ENCODE measurements at regions of chr17 and their contacts with region 1.

Region 1: DNA sequence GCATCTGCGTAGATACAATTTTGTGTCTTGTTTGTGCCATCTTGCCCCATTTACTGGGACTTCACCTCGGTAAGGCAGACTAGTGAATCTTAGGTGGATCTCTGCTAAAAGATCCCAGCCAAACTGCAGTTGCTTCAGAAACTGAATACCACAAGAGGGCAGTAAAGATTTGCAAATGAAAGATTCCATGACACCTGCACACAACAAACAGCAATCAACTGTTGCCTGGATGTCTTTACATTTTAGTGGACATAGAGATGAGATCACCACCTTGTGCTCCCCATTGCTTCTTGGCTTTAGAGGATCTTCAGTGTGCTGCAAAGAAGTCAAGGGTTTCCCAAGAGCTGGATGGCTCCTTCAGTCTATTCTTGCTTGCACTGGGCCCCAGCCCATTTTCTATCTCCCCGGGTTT is 119.2 kb upstream of the CACNG5 start:
- DNase-seq: no peak
- H3K4me3 ChIP-seq: no peak overlapping the region
- H3K27ac ChIP-seq: no peak overlapping the region
- H3K4me1 ChIP-seq: no peaks in the 10 kb centered on the region
- H3K27me3 ChIP-seq: no peaks in the 10 kb centered on the region
- CTCF ChIP-seq: peak in 2 of 3 donors; percentile 30 to 62
- EP300 ChIP-seq: no peak
- POLR2A ChIP-seq: no peak

Region 2: DNA sequence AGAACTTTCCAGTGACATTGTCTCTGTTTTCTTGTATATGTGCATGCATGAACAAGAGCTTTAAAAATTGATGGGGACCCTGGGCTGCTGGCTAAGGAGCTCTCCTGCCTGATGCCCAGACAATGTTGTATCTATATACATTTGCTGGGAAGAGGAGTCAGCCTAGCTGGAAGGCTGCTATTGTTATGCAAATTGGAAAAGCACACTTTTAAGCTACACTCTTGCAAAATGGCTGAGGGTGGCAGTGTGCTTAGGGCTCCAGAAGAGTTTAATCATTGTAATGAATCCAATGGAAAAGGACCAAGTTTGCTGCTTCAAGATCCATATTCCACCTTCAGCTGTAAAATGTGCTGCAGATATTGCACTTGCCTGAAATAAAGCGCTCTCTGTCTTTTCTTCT is 241.5 kb before region 1 on chr17:
- intact Hi-C with region 1: no loop called
- DNase-seq: no peak
- H3K4me3 ChIP-seq: no peak overlapping the region
- H3K27ac ChIP-seq: no peak overlapping the region
- H3K4me1 ChIP-seq: peaks cover 3% of the 10 kb centered on the region
- H3K27me3 ChIP-seq: no peaks in the 10 kb centered on the region
- CTCF ChIP-seq: no peak
- EP300 ChIP-seq: no peak
- POLR2A ChIP-seq: no peak

Region 3: DNA sequence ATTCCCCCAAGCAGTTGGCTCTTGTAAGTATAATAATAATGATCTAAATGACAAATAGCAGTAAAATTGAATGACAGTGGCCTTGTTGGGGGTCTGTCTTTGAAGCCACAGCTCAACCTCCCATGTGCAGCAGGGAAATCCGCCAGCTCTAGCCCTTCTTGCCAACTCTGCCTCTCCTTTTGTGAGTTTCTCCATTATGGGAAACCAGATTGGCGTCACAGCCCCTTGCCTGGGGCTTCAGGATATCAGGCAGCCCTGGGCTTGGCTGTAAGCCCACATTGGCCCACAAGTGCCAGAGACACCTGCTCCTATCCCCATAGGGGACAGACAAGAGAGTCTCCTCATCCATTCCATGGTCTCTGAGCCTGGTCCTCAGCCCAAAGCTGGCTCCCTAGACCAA is 48.8 kb after region 1 on chr17:
- intact Hi-C with region 1: no loop called
- DNase-seq: no peak
- H3K4me3 ChIP-seq: no peak overlapping the region
- H3K27ac ChIP-seq: no peak overlapping the region
- H3K4me1 ChIP-seq: no peaks in the 10 kb centered on the region
- H3K27me3 ChIP-seq: no peaks in the 10 kb centered on the region
- CTCF ChIP-seq: no peak
- EP300 ChIP-seq: no peak
- POLR2A ChIP-seq: no peak

Region 4: GRCh38 chr17:66906321-66907278 is 190.8 kb after region 1 on chr17:
- intact Hi-C with region 1: loop called (anchors 5 to 10 kb)
- DNase-seq: peak; percentile 79 to 87 (median 81)
- H3K4me3 ChIP-seq: no peak overlapping the region
- H3K27ac ChIP-seq: no peak overlapping the region
- H3K4me1 ChIP-seq: peaks cover 7% of the 10 kb centered on the region
- H3K27me3 ChIP-seq: no peaks in the 10 kb centered on the region
- CTCF ChIP-seq: peak; percentile 52 to 75 (median 58)
- EP300 ChIP-seq: no peak
- POLR2A ChIP-seq: no peak